ENCODE measurements at regions of chr16 and their contacts with region 1.

Region 1: GRCh38 chr16:88811769-88812512 is at the start of gene APRT:
- DNase-seq: peak; percentile 99
- ATAC-seq: peak; percentile 76
- H3K4me3 Mint-ChIP-seq: peak within 1 kb of the TSS; percentile 86
- H3K27ac Mint-ChIP-seq: peak within 1 kb of the TSS; percentile 94
- H3K4me1 Mint-ChIP-seq: peaks cover 22% of the 10 kb centered on the region
- H3K27me3 Mint-ChIP-seq: no peaks in the 10 kb centered on the region
- total RNA-seq, gene APRT: 105 to 179 TPM

Region 2: GRCh38 chr16:88737298-88738150 is 74.4 kb before region 1 on chr16:
- CTCF ChIA-PET with region 1: interaction called, 14 read pairs
- POLR2A ChIA-PET with region 1: interaction called, 5 read pairs
- intact Hi-C with region 1: loop called in 1 of 2 experiments (anchors 2 kb)
- DNase-seq: peak; percentile 89
- ATAC-seq: peak; percentile 91
- H3K4me3 Mint-ChIP-seq: no peak overlapping the region
- H3K27ac Mint-ChIP-seq: no peak overlapping the region
- H3K4me1 Mint-ChIP-seq: no peaks in the 10 kb centered on the region
- H3K27me3 Mint-ChIP-seq: no peaks in the 10 kb centered on the region

Region 3: GRCh38 chr16:88941913-88942909 is 130.3 kb after region 1 on chr16:
- CTCF ChIA-PET with region 1: no interaction called
- POLR2A ChIA-PET with region 1: no interaction called
- intact Hi-C with region 1: loop called in 1 of 2 experiments (anchors 5 kb)
- DNase-seq: peak; percentile 79
- ATAC-seq: peak; percentile 86
- H3K4me3 Mint-ChIP-seq: no peak overlapping the region
- H3K27ac Mint-ChIP-seq: no peak overlapping the region
- H3K4me1 Mint-ChIP-seq: no peaks in the 10 kb centered on the region
- H3K27me3 Mint-ChIP-seq: peaks cover 18% of the 10 kb centered on the region

Region 4: DNA sequence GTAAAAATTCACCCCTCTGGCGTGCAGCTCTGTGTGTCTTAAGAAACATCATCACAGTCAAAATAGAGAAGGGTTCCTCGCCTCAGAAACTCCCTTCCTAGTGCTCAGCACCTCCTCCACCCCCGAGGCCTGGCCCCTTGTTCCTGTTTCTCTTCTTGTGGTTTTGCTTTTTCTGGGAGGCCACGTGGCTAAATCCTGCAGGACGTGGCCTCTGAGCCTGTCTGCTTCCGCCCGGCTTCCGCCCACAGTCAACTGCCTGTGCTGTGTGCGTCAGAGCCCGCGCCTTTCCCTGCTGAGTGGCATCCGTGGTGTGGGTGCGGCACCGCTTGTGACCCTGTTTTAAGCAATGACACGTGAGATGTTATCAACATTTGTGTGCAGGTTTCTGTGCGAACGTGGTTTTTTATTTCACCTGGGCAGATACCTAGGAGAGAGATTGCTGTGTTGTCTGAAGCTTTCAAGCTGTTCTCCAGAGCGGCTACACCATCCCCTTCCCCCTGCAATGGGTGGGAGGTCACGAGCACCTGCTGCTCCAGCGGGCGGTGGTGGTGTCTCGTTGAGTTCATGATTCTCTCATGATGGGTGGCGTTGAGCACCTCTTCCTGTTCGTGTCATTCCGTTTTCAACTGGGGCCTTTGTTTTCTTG is 303.4 kb after region 1 on chr16:
- CTCF ChIA-PET with region 1: no interaction called
- POLR2A ChIA-PET with region 1: no interaction called
- intact Hi-C with region 1: loop called in 1 of 2 experiments (anchors 5 kb)
- DNase-seq: peak; percentile 90
- ATAC-seq: peak; percentile 86
- H3K4me3 Mint-ChIP-seq: peak overlapping the region; percentile 74
- H3K27ac Mint-ChIP-seq: peak overlapping the region; percentile 89
- H3K4me1 Mint-ChIP-seq: peaks cover 58% of the 10 kb centered on the region
- H3K27me3 Mint-ChIP-seq: no peaks in the 10 kb centered on the region

Region 5: DNA sequence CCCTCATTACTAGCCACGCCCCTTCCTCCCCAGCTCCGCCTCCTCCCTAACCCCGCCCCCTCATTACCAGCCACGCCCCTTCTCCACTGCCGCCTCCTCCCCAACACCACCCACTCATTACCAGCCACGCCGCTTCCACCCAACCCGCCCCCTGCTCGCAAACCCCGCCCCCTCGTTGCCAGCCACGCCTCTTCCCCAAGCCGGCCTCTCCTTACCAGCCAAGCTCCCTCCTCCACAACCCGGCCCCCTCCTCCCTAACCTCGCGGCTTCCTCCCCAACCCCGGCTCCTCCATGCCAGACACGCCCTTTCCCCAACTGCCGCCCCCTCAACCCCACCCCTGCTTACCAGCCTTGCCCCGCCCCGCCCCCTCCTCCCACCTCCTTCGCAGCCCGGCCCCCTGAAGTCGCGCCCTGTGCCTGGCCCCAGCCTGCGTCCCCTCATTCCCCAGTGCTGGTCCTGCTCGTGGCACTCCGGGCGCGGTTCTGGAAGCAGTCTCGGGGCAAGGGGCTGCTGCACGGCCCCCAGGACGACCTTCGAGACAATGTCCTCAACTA is 381.2 kb after region 1 on chr16:
- CTCF ChIA-PET with region 1: no interaction called
- POLR2A ChIA-PET with region 1: interaction called, 4 read pairs
- intact Hi-C with region 1: loop called in 1 of 2 experiments (anchors 1 kb)
- DNase-seq: no peak
- ATAC-seq: peak; percentile 78
- H3K4me3 Mint-ChIP-seq: no peak overlapping the region
- H3K27ac Mint-ChIP-seq: no peak overlapping the region
- H3K4me1 Mint-ChIP-seq: no peaks in the 10 kb centered on the region
- H3K27me3 Mint-ChIP-seq: no peaks in the 10 kb centered on the region